OCI-LY7 (cell line): ENCODE measurements at regions of chr9 and their contacts with region 1.

Region 1: GRCh38 chr9:94525396-94526035 is 29.4 kb upstream of the PCAT7 start:
- DNase-seq: peak; percentile 66
- H3K4me3 ChIP-seq: peak overlapping the region; percentile 13
- H3K27ac ChIP-seq: peak overlapping the region; percentile 97
- H3K4me1 ChIP-seq: peaks cover 71% of the 10 kb centered on the region
- CTCF ChIP-seq: no peak

Region 2: DNA sequence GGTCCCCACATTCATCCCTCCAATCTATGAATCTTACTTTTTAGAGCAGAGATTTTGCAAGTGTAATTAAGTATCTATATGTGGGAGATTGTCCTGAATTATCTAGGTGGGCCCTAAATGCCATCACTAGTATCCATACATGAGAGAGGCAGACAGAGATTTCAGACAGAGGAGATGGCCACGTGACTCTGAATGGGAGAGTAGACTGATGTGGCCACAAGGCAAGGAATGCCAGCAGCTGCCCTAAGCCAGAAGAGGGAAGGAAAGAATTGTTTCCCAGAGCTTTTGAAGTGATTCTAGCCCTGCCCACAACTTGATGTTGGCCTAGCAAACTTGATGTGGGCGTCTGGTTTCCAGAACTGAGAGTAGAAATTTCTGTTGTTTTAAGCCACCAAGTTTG is 60.7 kb before region 1 on chr9:
- CTCF ChIA-PET with region 1: no interaction called
- POLR2A ChIA-PET with region 1: no interaction called
- intact Hi-C with region 1: no loop called
- DNase-seq: no peak
- H3K4me3 ChIP-seq: no peak overlapping the region
- H3K27ac ChIP-seq: peak overlapping the region; percentile 17
- H3K4me1 ChIP-seq: peaks cover 14% of the 10 kb centered on the region
- CTCF ChIP-seq: no peak

Region 3: GRCh38 chr9:94480205-94480604 is 45.3 kb before region 1 on chr9:
- CTCF ChIA-PET with region 1: no interaction called
- POLR2A ChIA-PET with region 1: interaction called, 3 read pairs
- intact Hi-C with region 1: loop called (anchors 1 kb)
- DNase-seq: peak; percentile 61
- H3K4me3 ChIP-seq: peak overlapping the region; percentile 57
- H3K27ac ChIP-seq: peak overlapping the region; percentile 64
- H3K4me1 ChIP-seq: peaks cover 63% of the 10 kb centered on the region
- CTCF ChIP-seq: peak; percentile 53; the same call in 1 of the 2 replicates

Region 4: GRCh38 chr9:94498801-94499453 is 26.6 kb before region 1 on chr9:
- CTCF ChIA-PET with region 1: interaction called, 3 read pairs
- POLR2A ChIA-PET with region 1: interaction called, 10 read pairs
- intact Hi-C with region 1: loop called (anchors 2 kb)
- DNase-seq: peak; percentile 91
- H3K4me3 ChIP-seq: peak overlapping the region; percentile 51
- H3K27ac ChIP-seq: peak overlapping the region; percentile 96
- H3K4me1 ChIP-seq: peaks cover 90% of the 10 kb centered on the region
- CTCF ChIP-seq: no peak

Region 5: DNA sequence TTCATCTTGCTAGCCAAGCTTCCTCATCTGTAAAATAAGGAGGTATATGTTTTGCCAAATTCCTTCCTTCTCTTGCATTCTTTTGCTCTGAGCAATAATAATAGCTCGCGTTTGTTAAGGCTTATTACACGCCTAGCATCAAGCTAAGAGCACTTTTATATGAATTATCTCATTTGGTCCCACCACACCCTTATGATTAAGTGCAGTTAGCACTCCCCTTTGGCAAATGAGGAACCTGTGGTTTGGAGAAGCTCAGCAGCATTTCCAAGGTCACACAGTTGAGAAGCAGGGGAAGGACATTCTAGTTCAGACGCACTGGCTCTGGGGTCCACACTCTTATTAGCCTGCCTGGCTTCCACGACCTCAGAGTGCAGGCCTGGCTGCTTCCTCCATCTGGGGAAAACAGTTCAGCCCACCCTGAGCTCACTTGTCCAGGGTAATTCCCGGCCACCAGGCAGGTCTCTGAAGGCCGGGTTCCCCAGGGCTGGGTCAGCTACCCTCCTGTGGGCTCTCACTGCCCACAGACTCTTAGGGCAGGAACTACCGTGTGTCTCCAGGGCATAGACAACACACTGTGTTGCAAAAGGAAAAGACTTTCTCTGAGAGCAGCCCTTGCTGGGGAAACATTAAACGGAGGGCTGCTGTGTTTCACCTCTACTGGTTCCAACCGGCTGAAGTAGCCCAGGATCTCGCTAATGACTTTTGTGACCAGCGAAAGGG is 123.7 kb after region 1 on chr9:
- CTCF ChIA-PET with region 1: no interaction called
- POLR2A ChIA-PET with region 1: no interaction called
- intact Hi-C with region 1: no loop called
- DNase-seq: no peak
- H3K4me3 ChIP-seq: no peak overlapping the region
- H3K27ac ChIP-seq: no peak overlapping the region
- H3K4me1 ChIP-seq: no peaks in the 10 kb centered on the region
- CTCF ChIP-seq: no peak